ENCODE measurements at regions of chr10 and their contacts with region 1.

Region 1: DNA sequence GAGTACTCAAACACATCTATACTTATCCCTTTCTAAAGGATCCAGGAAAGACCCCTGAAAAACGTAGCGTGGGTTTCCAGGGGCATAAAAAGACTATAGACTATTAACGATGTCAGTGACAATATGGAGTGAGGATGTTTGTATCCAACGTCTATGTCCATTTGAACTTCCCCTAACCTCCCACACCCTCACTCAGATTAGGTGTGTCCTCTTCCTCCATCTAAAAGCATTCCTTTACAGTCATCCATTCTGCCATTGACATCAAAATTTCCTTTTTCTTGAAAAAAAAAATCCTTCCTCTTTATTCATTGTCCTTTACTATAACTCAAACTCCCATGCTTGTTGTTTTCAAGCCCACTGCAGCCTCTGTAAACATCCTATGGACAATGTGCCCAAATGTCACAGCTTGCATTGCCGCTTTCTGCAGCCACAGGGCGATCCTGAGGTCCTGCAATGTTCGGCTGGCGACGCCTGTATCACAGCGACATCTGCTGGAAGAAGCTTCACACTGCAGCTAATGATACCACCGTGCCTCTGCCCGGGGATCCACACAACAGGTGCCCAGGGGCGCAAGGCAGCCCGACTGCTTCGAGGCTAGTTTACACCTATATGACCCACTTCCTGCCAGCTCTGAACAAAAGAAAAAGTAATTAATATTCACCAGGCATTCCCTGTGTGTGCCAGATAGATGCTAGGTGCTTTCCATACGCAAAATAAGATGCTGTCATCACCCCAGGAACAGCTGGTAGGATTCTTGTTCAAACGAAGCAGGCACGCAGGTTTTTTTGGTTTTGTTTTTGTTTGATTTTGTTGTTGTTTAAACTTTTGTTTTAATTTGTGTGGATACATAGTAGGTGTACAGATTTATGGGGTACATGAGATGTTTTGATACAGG is 267.9 kb upstream of the GHITM start:
- DNase-seq: peak; percentile 2
- H3K4me3 ChIP-seq: no peak overlapping the region
- H3K27ac ChIP-seq: no peak overlapping the region
- H3K27me3 ChIP-seq: no peaks in the 10 kb centered on the region
- CTCF ChIP-seq: peak; percentile 71

Region 2: GRCh38 chr10:82796510-82796909 is 1074.9 kb before region 1 on chr10:
- CTCF ChIA-PET with region 1: interaction called, 13 read pairs
- POLR2A ChIA-PET with region 1: no interaction called
- DNase-seq: no peak
- H3K4me3 ChIP-seq: no peak overlapping the region
- H3K27ac ChIP-seq: no peak overlapping the region
- H3K27me3 ChIP-seq: no peaks in the 10 kb centered on the region
- CTCF ChIP-seq: peak; percentile 30

Region 3: GRCh38 chr10:83881661-83882060 is 10.2 kb after region 1 on chr10:
- CTCF ChIA-PET with region 1: interaction called, 14 read pairs
- POLR2A ChIA-PET with region 1: no interaction called
- DNase-seq: no peak
- H3K4me3 ChIP-seq: no peak overlapping the region
- H3K27ac ChIP-seq: no peak overlapping the region
- H3K27me3 ChIP-seq: no peaks in the 10 kb centered on the region
- CTCF ChIP-seq: no peak

Region 4: DNA sequence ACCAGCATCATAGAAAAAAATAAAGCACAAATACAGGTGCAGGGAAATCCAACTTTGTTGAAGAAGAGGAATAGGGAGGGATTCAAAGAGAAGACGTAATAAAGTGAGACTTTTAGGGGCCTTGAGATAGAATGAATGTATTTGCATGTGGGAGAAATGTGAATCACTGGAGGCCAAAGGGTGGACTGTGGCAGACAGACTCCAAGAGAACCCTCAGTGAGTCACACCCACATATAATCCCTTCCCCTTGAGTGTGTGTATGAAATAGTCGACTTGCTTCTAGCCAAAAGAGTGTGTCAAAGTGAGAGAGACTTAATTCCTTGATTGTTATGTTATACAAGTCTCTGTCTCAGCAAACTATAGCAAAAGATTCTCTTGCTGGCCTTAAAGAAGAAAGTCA is 166.6 kb after region 1 on chr10:
- CTCF ChIA-PET with region 1: no interaction called
- POLR2A ChIA-PET with region 1: no interaction called
- DNase-seq: no peak
- H3K4me3 ChIP-seq: no peak overlapping the region
- H3K27ac ChIP-seq: no peak overlapping the region
- H3K27me3 ChIP-seq: no peaks in the 10 kb centered on the region
- CTCF ChIP-seq: no peak

Measured in AG04450 (cell line).